G401 (cell line): ENCODE measurements at regions of chr2 and their contacts with region 1.

Region 1: GRCh38 chr2:42404676-42405075 is 43.7 kb upstream of the COX7A2L start:
- DNase-seq: no peak

Region 2: DNA sequence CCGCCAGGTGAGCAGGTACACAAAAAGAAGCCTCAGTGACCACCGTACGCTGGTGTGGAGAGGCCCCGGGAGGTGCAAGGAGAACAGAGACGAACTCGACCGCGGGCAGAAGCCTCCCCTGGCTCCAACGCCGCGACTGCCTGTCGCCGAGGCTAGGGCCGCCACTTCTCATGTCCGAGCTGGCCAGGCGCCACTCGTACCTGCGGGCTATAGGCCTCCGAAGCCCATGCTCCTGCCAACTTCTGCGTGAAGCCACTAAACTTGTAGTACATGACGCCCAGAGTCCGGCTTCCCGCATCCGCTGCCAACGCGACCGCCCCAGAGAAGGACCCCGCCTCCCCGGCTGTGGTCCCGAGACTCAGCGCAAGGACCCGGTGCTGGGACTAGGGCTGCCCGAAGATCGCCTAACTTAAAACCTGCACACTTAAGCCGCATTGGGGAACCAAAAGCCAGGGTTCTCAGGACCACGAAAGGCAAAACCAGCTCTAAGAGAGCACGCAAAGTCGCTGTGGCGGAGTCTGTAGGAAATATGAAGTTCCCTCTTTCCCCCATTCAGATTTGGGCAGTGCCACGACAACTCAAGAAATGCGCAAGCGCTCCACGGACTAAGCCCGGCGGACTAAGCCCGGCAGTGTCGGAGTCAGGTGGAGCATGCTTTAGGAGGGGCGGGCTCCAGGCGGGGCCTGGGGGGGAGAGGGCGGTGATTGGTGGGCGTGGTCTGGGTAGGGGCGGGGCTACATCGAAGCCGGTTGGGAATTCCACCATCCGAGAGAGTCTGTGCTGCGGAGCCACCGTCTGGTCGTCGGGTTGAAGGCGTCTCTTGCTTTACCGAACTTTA is 43.6 kb before region 1 on chr2 and contains the start of gene COX7A2L:
- in situ Hi-C with region 1: loop called (anchors 5 kb)
- DNase-seq: peak; percentile 98
- total RNA-seq, gene COX7A2L: 258 and 299 TPM in 2 replicates